PC-9 (cell line): ENCODE measurements at regions of chr3 and their contacts with region 1.

Region 1: DNA sequence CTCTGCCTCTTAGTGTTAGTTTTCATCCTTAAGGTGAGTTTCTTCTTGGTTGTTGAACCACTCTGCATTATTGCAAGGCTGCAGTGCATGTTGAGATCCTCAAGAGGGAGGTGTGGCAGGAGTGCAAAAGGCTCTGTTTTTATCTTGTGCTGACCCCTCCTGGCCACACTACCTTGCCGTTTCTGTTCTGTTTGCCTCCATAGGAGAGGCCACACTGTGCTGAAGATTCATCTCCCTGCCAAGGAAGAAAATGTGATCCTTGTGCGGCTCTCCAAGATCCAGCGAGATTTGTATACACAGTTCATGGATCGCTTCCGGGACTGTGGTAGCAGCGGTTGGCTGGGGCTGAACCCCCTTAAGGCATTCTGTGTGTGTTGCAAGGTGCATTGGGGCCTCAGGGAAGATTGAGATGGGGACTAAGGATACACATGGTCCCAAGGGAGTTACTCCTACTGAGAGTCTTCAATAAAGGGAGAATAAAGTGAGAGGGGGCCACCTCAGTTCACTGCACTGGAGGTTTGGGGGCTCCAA is 33.0 kb upstream of the TEX264 start:
- DNase-seq: peak; percentile 33 to 59
- H3K4me3 ChIP-seq: no peak overlapping the region
- H3K27ac ChIP-seq: no peak overlapping the region
- H3K4me1 ChIP-seq: peaks cover 16% of the 10 kb centered on the region
- H3K27me3 ChIP-seq: no peaks in the 10 kb centered on the region
- CTCF ChIP-seq: peak; percentile 79

Region 2: DNA sequence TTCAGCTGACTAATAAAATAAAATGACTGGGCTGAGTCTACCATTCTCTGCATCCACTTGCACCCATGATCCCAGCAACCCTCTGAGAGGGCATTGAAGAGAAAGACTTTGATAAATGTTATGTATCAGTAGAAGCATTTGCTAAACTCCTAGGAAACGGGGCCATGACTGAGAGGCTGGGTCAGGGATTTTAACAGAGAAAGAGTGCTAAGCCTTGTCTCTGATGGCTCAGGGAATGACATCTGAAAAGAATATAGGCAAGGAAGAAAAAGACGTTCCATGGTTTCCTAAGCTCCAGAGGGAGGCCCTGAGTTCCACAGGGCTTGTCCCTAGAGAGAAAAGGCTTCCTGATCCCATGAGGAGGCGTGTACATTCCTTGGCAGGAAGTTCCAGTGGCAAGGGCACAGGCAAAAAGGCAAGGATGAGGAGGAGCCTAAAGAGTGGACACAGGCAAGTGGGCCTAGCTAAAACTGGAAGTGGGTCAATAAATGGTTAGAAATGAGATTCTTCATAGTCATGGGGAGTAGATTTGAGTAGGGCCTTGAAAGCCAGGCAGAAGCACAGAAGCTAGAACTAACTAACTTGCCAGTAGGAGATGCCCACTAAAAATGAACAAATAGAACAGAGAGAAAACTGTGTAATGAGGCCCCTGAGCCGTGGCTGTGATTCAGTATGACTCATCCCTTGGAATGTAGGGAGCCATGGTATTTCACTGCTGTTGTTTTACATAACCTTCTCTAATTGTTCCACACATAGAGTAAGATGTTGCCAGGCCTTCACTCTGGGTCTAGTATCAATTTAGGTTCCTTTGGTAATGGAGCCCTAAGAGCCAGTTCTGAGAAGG is 297.8 kb before region 1 on chr3:
- CTCF ChIA-PET with region 1: no interaction called
- POLR2A ChIA-PET with region 1: no interaction called
- intact Hi-C with region 1: no loop called
- DNase-seq: peak; percentile 67 to 88
- H3K4me3 ChIP-seq: no peak overlapping the region
- H3K27ac ChIP-seq: peak overlapping the region; percentile 91
- H3K4me1 ChIP-seq: peaks cover 54% of the 10 kb centered on the region
- H3K27me3 ChIP-seq: no peaks in the 10 kb centered on the region
- CTCF ChIP-seq: no peak

Region 3: DNA sequence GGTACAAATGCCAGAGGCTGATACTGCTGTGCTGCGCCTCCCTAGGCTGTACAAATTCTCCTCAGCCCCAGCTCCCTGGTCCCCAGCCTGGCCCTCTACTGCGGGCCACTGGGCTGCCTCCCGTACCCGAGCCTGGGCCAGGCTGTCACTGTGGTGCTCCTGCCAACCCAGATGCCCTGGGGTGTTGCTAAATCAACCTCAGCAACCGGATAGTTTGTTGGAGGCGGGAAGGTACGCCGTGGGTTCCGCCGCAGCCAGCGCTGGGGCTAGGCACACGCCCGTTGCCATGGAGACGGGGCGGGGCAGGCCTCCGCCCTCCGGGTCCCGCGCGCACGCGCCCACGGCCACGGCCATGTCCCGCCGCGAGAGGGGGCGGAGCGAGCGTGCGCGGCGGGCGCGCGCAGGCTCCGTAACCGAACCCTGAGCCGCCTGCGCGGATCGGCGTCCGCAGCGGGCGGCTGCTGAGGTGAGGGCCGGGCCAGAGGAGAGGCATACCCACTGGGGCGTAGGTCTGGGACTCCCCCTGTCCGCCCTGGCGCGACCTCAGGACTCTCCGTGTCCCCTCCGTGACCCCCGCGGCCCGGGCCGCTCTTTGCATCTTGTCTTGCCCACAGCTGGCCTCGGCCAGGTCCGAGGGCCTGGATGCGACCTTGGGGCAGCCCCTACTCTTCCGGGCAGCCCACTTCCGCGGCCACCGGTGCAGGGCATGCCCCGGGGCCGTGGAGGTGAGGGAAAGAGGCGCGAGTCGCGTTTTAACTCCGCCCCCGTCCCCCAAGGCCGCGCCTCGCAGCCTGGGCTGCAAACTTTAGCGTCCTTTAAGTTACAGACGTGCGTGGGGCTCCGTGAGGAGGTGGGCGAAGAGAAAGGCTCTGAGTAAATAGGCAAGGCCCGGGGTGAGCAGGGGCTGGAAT is 33.1 kb after region 1 on chr3 and contains the start of gene TEX264:
- CTCF ChIA-PET with region 1: interaction called, 5 read pairs
- POLR2A ChIA-PET with region 1: no interaction called
- intact Hi-C with region 1: loop called (anchors 1 kb)
- DNase-seq: peak; percentile 61 to 93
- H3K4me3 ChIP-seq: peak within 1 kb of the TSS; percentile 82
- H3K27ac ChIP-seq: peak within 1 kb of the TSS; percentile 47; the same call in 1 of the 2 replicates
- H3K4me1 ChIP-seq: peaks cover 18% of the 10 kb centered on the region
- H3K27me3 ChIP-seq: no peaks in the 10 kb centered on the region
- CTCF ChIP-seq: no peak
- total RNA-seq, gene TEX264: 44.3 and 53.0 TPM in 2 replicates

Region 4: GRCh38 chr3:51982782-51983577 is 345.0 kb after region 1 on chr3 and contains the start of gene ACY1:
- CTCF ChIA-PET with region 1: no interaction called
- POLR2A ChIA-PET with region 1: no interaction called
- intact Hi-C with region 1: no loop called
- DNase-seq: peak; percentile 82 to 95
- H3K4me3 ChIP-seq: peak within 1 kb of the TSS; percentile 67
- H3K27ac ChIP-seq: peak within 1 kb of the TSS; percentile 89
- H3K4me1 ChIP-seq: peaks cover 29% of the 10 kb centered on the region
- H3K27me3 ChIP-seq: no peaks in the 10 kb centered on the region
- CTCF ChIP-seq: peak; percentile 53
- total RNA-seq, gene ACY1: 52.2 and 63.3 TPM in 2 replicates